ENCODE measurements at regions of chr10 and their contacts with region 1.

Region 1: DNA sequence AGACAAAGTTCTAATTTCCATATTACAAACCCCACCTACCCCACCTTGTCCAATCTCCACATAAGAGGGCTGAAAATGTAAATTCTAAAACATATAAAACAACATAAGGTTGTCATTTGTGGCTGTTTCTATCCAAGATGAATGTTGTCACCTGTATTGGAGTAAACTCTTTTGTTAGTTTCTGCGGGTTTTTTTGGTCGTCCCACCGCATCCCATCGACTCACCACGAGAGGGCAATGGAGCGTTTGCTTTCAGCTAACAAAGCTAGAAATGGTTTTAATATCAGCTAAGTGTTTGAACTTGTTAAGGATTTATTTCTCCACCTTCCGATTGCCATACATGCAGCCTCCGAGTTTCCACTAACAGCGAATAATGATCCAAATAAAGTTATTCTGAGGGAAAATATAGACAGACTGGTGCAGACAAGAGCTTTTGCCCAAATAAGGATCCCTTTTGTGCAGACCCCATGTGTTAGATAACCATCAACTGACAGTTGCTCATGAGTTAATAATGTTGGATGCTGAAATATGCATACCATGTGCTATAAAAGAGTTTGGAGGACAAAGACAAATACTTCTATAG is 137.2 kb downstream of the ARID5B start:
- DNase-seq: peak; percentile 53 to 82 (median 73)
- ATAC-seq: peak; percentile 89
- H3K4me3 ChIP-seq: no peak overlapping the region
- H3K4me3 Mint-ChIP-seq: peak overlapping the region; percentile 43
- H3K27ac ChIP-seq: no peak overlapping the region
- H3K27ac Mint-ChIP-seq: no peak overlapping the region
- H3K4me1 ChIP-seq: peaks cover 10% of the 10 kb centered on the region
- H3K4me1 Mint-ChIP-seq: peaks cover 54% of the 10 kb centered on the region
- H3K27me3 ChIP-seq: no peaks in the 10 kb centered on the region
- H3K27me3 Mint-ChIP-seq: no peaks in the 10 kb centered on the region
- CTCF ChIP-seq: peak; percentile 86

Region 2: GRCh38 chr10:61765176-61766087 is 273.3 kb before region 1 on chr10:
- CTCF ChIA-PET with region 1: no interaction called
- POLR2A ChIA-PET with region 1: no interaction called
- intact Hi-C with region 1: no loop called
- DNase-seq: peak in 1 of 9 experiments; percentile 27
- ATAC-seq: peak; percentile 54
- H3K4me3 ChIP-seq: no peak overlapping the region
- H3K4me3 Mint-ChIP-seq: peak overlapping the region; percentile 12
- H3K27ac ChIP-seq: peak overlapping the region in 1 of 2 experiments; percentile 47
- H3K27ac Mint-ChIP-seq: peak overlapping the region; percentile 74
- H3K4me1 ChIP-seq: peaks cover 7% of the 10 kb centered on the region
- H3K4me1 Mint-ChIP-seq: peaks cover 11% of the 10 kb centered on the region
- H3K27me3 ChIP-seq: no peaks in the 10 kb centered on the region
- H3K27me3 Mint-ChIP-seq: no peaks in the 10 kb centered on the region
- CTCF ChIP-seq: no peak

Region 3: DNA sequence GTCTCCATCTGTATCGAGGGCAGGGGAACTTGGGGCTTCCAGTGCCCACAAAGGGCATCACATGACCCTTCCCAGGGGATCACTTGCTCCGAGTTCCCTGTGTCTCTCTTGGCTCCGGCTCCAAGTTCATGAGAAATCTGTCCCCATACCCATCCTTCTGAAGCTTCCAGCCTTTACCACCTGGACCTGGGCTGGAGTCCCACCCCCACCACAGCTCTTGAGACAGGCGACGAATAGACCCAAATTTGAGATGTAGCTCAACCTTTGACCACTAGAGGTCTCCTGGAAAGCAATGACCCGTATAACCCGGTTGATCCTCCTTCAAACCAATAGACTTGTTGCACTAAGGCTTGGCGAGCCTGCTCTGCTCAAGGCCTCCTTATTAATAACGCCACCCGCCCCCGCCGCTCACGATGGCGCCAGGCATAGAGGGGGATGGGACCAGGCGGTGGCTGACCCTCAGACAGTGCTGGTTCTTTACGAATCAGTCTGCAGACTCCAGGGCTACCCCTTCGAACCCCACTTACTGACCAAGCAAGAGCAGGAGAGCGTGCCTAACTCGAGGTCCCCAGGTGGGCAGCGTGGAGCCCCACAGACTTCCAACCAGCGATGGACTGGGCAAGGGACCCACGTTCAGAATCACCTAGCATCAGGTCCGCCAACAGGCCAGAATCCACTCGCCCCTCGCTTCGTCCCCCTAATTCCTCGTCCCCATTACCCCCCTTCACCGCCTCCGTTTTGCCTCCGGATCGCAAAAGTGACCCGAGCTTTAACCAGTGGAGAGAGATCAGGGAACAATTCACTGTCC is 141.6 kb before region 1 on chr10:
- CTCF ChIA-PET with region 1: interaction called, 30 read pairs
- POLR2A ChIA-PET with region 1: interaction called, 6 read pairs
- intact Hi-C with region 1: loop called (anchors 2 to 5 kb)
- DNase-seq: peak in 8 of 9 experiments; percentile 10 to 88 (median 52)
- ATAC-seq: peak; percentile 66
- H3K4me3 ChIP-seq: peak overlapping the region; percentile 6 to 34
- H3K4me3 Mint-ChIP-seq: peak overlapping the region; percentile 83
- H3K27ac ChIP-seq: no peak overlapping the region
- H3K27ac Mint-ChIP-seq: peak overlapping the region; percentile 69
- H3K4me1 ChIP-seq: peaks cover 20% of the 10 kb centered on the region
- H3K4me1 Mint-ChIP-seq: peaks cover 33% of the 10 kb centered on the region
- H3K27me3 ChIP-seq: no peaks in the 10 kb centered on the region
- H3K27me3 Mint-ChIP-seq: no peaks in the 10 kb centered on the region
- CTCF ChIP-seq: peak; percentile 53

Region 4: GRCh38 chr10:61992671-61993668 is 45.7 kb before region 1 on chr10:
- CTCF ChIA-PET with region 1: interaction called, 3 read pairs
- POLR2A ChIA-PET with region 1: interaction called, 4 read pairs
- intact Hi-C with region 1: loop called in 1 of 2 experiments (anchors 5 kb)
- DNase-seq: peak in 8 of 9 experiments; percentile 15 to 88 (median 47)
- ATAC-seq: peak; percentile 83
- H3K4me3 ChIP-seq: peak overlapping the region in 1 of 2 experiments; percentile 27
- H3K4me3 Mint-ChIP-seq: peak overlapping the region; percentile 64
- H3K27ac ChIP-seq: peak overlapping the region; percentile 20 to 85
- H3K27ac Mint-ChIP-seq: peak overlapping the region; percentile 90
- H3K4me1 ChIP-seq: peaks cover 16% of the 10 kb centered on the region
- H3K4me1 Mint-ChIP-seq: peaks cover 48% of the 10 kb centered on the region
- H3K27me3 ChIP-seq: no peaks in the 10 kb centered on the region
- H3K27me3 Mint-ChIP-seq: no peaks in the 10 kb centered on the region
- CTCF ChIP-seq: no peak

Region 5: DNA sequence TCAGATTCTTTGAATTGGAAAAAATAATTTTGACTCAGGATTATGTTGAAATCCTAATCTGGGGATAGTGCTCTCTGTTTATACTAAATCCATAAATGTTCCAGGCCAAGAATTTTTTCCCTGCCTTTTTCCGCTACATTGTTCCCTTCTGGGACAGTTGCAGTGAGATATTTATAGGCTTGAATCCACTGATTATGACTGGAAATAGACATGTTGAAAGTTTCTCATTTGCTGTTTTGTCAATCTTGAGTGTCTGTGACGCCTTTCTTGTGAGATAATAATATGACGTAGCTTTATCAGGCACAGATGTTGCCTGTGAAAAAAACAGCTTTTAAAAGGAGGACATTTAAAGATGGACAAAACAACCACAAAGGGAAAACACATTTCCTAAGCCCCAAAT is 18.7 kb after region 1 on chr10:
- CTCF ChIA-PET with region 1: interaction called, 14 read pairs
- POLR2A ChIA-PET with region 1: interaction called, 4 read pairs
- intact Hi-C with region 1: loop called in 1 of 2 experiments (anchors 2 kb)
- DNase-seq: no peak
- ATAC-seq: no peak
- H3K4me3 ChIP-seq: no peak overlapping the region
- H3K4me3 Mint-ChIP-seq: no peak overlapping the region
- H3K27ac ChIP-seq: no peak overlapping the region
- H3K27ac Mint-ChIP-seq: no peak overlapping the region
- H3K4me1 ChIP-seq: no peaks in the 10 kb centered on the region
- H3K4me1 Mint-ChIP-seq: peaks cover 38% of the 10 kb centered on the region
- H3K27me3 ChIP-seq: no peaks in the 10 kb centered on the region
- H3K27me3 Mint-ChIP-seq: no peaks in the 10 kb centered on the region
- CTCF ChIP-seq: no peak

Region 6: GRCh38 chr10:62199584-62199983 is 160.9 kb after region 1 on chr10:
- CTCF ChIA-PET with region 1: interaction called, 3 read pairs
- POLR2A ChIA-PET with region 1: no interaction called
- intact Hi-C with region 1: loop called in 1 of 2 experiments (anchors 5 kb)
- DNase-seq: peak in 2 of 9 experiments; percentile 34 to 65
- ATAC-seq: peak; percentile 82
- H3K4me3 ChIP-seq: no peak overlapping the region
- H3K4me3 Mint-ChIP-seq: no peak overlapping the region
- H3K27ac ChIP-seq: no peak overlapping the region
- H3K27ac Mint-ChIP-seq: peak overlapping the region; percentile 14
- H3K4me1 ChIP-seq: peaks cover 7% of the 10 kb centered on the region
- H3K4me1 Mint-ChIP-seq: peaks cover 10% of the 10 kb centered on the region
- H3K27me3 ChIP-seq: no peaks in the 10 kb centered on the region
- H3K27me3 Mint-ChIP-seq: no peaks in the 10 kb centered on the region
- CTCF ChIP-seq: no peak

Region 7: DNA sequence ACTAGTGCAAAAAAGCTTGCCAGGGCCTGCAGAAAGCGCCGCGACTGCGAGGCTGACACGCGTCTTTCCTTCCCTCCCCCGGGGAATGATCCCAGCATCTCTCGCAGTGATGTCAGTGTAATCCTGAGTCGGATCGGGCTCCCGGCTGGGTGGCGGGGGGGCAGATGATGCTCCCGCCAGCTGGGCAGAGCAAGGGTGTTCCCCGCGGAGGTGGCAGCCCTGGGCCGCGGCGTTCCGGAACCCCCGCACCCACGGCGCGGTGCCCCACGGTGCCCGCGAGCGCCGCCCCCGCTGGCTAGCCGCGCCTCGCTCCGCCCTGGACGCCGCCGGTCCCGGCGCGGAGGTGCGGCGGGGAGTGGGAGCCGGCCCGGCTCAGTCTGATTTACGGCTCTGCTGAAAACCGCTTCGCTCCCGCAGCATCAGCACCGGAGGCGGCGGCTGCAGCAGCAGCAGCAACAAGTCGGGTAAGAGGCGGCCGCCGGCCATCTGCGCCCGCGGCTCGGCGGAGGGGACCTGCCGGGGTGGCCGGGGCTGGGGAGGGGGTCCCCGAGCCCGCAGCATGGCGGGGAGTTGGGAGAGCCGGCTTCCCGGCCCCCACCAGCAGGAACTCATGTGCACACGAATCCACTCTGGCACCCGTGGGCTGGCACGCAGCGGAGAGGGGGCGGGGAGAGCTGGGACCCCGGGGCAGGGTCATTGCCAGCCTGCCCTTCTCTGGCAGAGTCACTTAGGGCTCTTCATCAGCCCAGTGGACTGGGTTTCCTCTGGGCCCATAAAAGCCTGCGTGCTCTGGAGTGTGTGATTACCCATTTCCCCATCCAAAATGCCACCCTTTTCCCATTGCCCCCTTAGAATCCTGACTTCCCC is 335.5 kb after region 1 on chr10 and contains the start of gene ZNF365:
- CTCF ChIA-PET with region 1: no interaction called
- POLR2A ChIA-PET with region 1: no interaction called
- intact Hi-C with region 1: no loop called
- DNase-seq: peak in 8 of 9 experiments; percentile 17 to 76 (median 31)
- ATAC-seq: peak; percentile 81
- H3K4me3 ChIP-seq: peak within 1 kb of the TSS; percentile 47
- H3K4me3 Mint-ChIP-seq: peak within 1 kb of the TSS; percentile 78
- H3K27ac ChIP-seq: peak within 1 kb of the TSS in 1 of 2 experiments; percentile 40
- H3K27ac Mint-ChIP-seq: no peak within 1 kb of the TSS
- H3K4me1 ChIP-seq: peaks cover 10% of the 10 kb centered on the region
- H3K4me1 Mint-ChIP-seq: peaks cover 14% of the 10 kb centered on the region
- H3K27me3 ChIP-seq: peaks cover 2 to 4% of the 10 kb centered on the region in 2 experiments
- H3K27me3 Mint-ChIP-seq: peaks cover 22% of the 10 kb centered on the region
- CTCF ChIP-seq: no peak
- total RNA-seq, gene ZNF365: 0.60 to 0.61 TPM

Region 8: DNA sequence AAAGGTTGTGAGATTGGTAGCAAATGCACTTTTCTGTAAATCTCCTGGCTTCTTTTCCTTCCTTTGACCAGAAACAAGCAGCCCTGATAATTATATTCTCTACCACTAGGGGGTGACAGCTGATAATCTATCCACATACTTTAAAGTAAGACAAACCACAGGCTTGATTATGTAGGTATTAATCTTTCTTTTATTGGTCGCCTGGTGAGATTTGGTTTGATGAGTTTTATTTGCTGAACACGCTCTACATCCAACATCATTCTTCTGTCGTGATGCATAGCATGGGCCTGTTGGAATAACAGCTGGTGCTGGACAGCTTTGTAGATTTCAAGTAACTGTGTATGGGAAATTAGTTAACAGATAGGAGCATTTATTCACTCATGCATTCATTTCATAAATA is 399.0 kb after region 1 on chr10:
- CTCF ChIA-PET with region 1: interaction called, 3 read pairs
- POLR2A ChIA-PET with region 1: no interaction called
- intact Hi-C with region 1: loop called in 1 of 2 experiments (anchors 2 kb)
- DNase-seq: peak in 3 of 9 experiments; percentile 20 to 72 (median 65)
- ATAC-seq: peak; percentile 66
- H3K4me3 ChIP-seq: no peak overlapping the region
- H3K4me3 Mint-ChIP-seq: no peak overlapping the region
- H3K27ac ChIP-seq: no peak overlapping the region
- H3K27ac Mint-ChIP-seq: no peak overlapping the region
- H3K4me1 ChIP-seq: no peaks in the 10 kb centered on the region
- H3K4me1 Mint-ChIP-seq: no peaks in the 10 kb centered on the region
- H3K27me3 ChIP-seq: no peaks in the 10 kb centered on the region
- H3K27me3 Mint-ChIP-seq: peaks cover 6% of the 10 kb centered on the region
- CTCF ChIP-seq: peak; percentile 95